PC-9 (cell line): ENCODE measurements at regions of chr3 and their contacts with region 1.

Region 1: GRCh38 chr3:104604369-104605010 is 762.2 kb upstream of the ALCAM start:
- DNase-seq: peak in 1 of 2 experiments; percentile 50
- H3K4me3 ChIP-seq: peak overlapping the region; percentile 11; the same call in 1 of the 2 replicates
- H3K27ac ChIP-seq: no peak overlapping the region
- H3K4me1 ChIP-seq: peaks cover 8% of the 10 kb centered on the region
- H3K27me3 ChIP-seq: no peaks in the 10 kb centered on the region
- CTCF ChIP-seq: peak; percentile 57

Region 2: DNA sequence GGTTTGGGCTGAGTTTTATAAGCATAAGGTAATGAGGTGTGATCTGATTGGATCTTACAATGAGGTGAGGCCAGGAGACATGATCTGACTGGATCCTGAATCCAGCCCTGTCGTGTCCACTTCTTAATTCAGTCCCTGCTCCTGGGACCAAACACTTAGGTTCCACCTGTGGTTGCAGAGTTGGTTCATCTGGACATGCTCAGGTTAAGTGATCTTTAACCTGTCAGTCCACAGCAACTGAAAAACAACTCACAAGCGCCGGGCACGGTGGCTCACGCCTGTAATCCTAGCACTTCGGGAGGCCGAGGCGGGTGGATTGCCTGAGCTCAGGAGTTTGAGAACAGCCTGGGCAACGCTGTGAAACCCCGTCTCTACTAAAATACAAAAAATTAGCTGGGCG is 82.9 kb after region 1 on chr3:
- CTCF ChIA-PET with region 1: no interaction called
- POLR2A ChIA-PET with region 1: no interaction called
- intact Hi-C with region 1: no loop called
- DNase-seq: no peak
- H3K4me3 ChIP-seq: no peak overlapping the region
- H3K27ac ChIP-seq: no peak overlapping the region
- H3K4me1 ChIP-seq: no peaks in the 10 kb centered on the region
- H3K27me3 ChIP-seq: no peaks in the 10 kb centered on the region
- CTCF ChIP-seq: no peak

Region 3: GRCh38 chr3:104738271-104738670 is 133.8 kb after region 1 on chr3:
- CTCF ChIA-PET with region 1: no interaction called
- POLR2A ChIA-PET with region 1: no interaction called
- intact Hi-C with region 1: no loop called
- DNase-seq: no peak
- H3K4me3 ChIP-seq: no peak overlapping the region
- H3K27ac ChIP-seq: no peak overlapping the region
- H3K4me1 ChIP-seq: no peaks in the 10 kb centered on the region
- H3K27me3 ChIP-seq: no peaks in the 10 kb centered on the region
- CTCF ChIP-seq: no peak

Region 4: DNA sequence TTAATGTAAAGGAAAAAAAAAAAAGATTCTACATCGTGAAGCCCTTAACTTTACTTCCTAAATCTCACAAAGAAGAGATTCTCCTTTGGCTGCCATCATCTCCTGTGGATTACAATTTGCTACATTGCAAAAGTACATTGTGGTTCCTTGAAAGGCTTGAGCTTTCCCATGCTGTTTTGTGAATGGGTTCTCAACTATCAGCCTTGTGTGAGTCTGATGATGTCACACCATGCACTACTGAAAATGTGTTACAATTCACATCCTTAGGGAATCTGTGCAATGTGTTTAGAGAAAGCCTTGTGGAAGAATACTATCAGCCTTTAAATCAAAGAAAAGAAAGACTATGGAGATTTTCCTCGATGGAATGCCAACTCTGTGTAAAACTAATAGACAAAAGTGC is 252.3 kb after region 1 on chr3:
- CTCF ChIA-PET with region 1: interaction called, 12 read pairs
- POLR2A ChIA-PET with region 1: no interaction called
- intact Hi-C with region 1: no loop called
- DNase-seq: no peak
- H3K4me3 ChIP-seq: no peak overlapping the region
- H3K27ac ChIP-seq: no peak overlapping the region
- H3K4me1 ChIP-seq: no peaks in the 10 kb centered on the region
- H3K27me3 ChIP-seq: no peaks in the 10 kb centered on the region
- CTCF ChIP-seq: no peak